ENCODE measurements at regions of chr4 and their contacts with region 1.

Region 1: GRCh38 chr4:79197275-79198009 is 128.4 kb downstream of the NAA11 start:
- DNase-seq: no peak
- H3K4me3 ChIP-seq: no peak overlapping the region
- H3K27ac ChIP-seq: no peak overlapping the region
- H3K4me1 ChIP-seq: no peaks in the 10 kb centered on the region
- CTCF ChIP-seq: no peak

Region 2: DNA sequence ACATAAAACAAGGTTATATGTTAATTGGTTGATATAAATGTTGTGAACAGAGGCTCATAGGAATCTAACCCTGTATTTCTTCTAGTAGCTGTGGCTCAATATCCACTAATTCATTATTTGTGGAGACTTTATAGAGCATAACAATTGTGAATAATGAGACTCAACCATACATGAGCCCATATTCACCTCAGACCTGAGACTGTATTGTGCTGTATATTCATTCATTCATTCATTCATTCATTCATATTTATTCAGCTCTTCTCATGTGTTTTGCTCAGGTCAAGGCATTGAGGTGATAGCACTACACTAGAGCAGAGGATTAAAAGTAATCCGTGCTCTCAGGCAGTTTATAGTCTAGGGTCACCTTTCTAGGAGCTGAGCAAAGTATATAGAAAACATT is 670.3 kb before region 1 on chr4:
- CTCF ChIA-PET with region 1: no interaction called
- POLR2A ChIA-PET with region 1: interaction called, 16 read pairs
- intact Hi-C with region 1: no loop called
- DNase-seq: no peak
- H3K4me3 ChIP-seq: no peak overlapping the region
- H3K27ac ChIP-seq: no peak overlapping the region
- H3K4me1 ChIP-seq: no peaks in the 10 kb centered on the region
- CTCF ChIP-seq: no peak

Measured in OCI-LY7 (cell line).